GM10248 (cell line): ENCODE measurements at regions of chr17 and their contacts with region 1.

Region 1: GRCh38 chr17:1055751-1056645 is 59.1 kb downstream of the TIMM22 start:
- DNase-seq: peak; percentile 75
- CTCF ChIP-seq: peak; percentile 58

Region 2: DNA sequence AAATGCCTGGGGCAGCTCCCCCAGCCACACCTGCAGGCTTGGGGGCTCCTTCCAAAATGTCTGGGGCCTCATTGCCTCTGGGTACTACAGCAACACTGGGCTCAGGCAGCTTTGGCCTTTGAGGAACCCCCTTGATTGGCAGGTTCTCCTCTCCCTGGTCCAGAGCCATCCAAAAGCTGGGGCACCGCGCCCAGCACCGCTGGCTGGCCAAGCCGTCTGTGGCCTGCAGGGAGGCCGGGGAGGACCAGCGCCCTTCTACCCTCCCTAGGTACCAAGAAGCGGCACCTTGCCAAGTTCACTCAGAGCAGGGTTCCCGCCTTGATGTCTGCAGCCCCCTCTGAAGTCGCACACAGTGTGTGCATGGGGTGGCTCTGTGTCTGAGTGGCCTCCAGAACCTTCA is 29.0 kb before region 1 on chr17:
- CTCF ChIA-PET with region 1: interaction called, 11 read pairs
- POLR2A ChIA-PET with region 1: no interaction called
- DNase-seq: no peak
- CTCF ChIP-seq: no peak

Region 3: DNA sequence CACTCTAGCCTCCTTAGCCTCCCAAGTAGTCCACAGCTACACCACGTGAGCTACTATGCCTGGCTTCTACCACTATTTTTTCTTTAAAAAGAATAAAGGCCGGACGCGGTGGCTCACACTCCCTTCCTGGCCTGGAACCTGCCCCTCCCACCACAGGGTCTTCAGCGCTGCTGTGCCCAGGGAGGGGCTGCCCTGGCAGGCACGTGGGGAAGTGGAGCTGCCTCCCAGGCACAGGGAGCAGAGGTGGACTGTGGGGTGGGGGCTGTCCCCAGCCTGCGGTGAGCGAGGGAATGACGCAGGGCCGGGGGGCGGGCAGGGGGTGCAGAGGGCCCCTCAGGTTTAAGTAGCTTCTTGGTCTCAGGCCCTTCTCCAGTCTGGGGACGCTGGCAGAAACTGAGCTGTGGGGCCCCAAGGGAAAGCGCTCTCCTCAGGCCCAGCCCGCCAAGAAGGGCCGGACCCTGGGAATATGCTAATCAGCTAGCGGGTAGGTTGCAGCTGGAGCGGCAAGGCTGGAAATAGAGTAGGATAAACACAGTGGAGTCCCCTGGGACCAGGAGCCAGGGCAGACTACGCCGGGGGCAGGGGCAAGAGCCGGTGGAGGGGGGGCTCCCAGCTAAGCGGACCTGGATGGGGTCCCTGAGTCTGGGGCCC is 12.3 kb before region 1 on chr17:
- CTCF ChIA-PET with region 1: interaction called, 31 read pairs
- POLR2A ChIA-PET with region 1: no interaction called
- DNase-seq: no peak
- CTCF ChIP-seq: no peak